GM23248 (cell line): ENCODE measurements at regions of chr12 and their contacts with region 1.

Region 1: GRCh38 chr12:60112763-60113162 is 516.9 kb downstream of the SLC16A7 start:
- DNase-seq: no peak
- H3K4me3 ChIP-seq: no peak overlapping the region
- H3K27ac ChIP-seq: no peak overlapping the region
- H3K4me1 ChIP-seq: no peaks in the 10 kb centered on the region
- H3K27me3 ChIP-seq: no peaks in the 10 kb centered on the region

Region 2: DNA sequence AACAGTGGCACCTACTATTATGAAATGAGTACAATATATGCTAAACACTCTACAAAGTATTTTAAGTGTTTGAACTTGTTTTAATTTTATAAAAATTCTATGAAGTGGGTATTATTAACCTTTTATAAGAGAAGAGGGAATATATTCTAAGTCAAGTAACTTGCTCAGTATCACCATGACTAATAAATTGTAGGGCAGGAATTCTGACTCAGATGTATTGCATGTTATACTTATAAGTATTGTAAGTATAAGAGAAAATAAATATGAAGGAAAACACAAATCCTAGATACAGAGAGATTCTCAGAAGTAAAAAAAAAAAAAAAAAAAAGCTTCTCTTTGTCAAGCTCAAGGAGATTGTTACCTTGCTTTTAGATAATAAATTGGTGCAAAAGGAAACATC is 376.3 kb after region 1 on chr12:
- in situ Hi-C with region 1: loop called (anchors 10 kb)
- DNase-seq: peak; percentile 54
- H3K4me3 ChIP-seq: no peak overlapping the region
- H3K27ac ChIP-seq: no peak overlapping the region
- H3K4me1 ChIP-seq: peaks cover 11% of the 10 kb centered on the region
- H3K27me3 ChIP-seq: no peaks in the 10 kb centered on the region